ENCODE measurements at regions of chr20 and their contacts with region 1.

Region 1: GRCh38 chr20:2349818-2350508 is 30.7 kb upstream of the TGM6 start:
- DNase-seq: no peak
- ATAC-seq: no peak
- H3K4me3 Mint-ChIP-seq: no peak overlapping the region
- H3K27ac Mint-ChIP-seq: no peak overlapping the region
- H3K4me1 Mint-ChIP-seq: peaks cover 3% of the 10 kb centered on the region
- H3K27me3 Mint-ChIP-seq: peaks cover 20% of the 10 kb centered on the region
- CTCF ChIP-seq: no peak

Region 2: GRCh38 chr20:2237059-2237458 is 112.9 kb before region 1 on chr20:
- CTCF ChIA-PET with region 1: no interaction called
- POLR2A ChIA-PET with region 1: no interaction called
- intact Hi-C with region 1: no loop called
- DNase-seq: no peak
- ATAC-seq: no peak
- H3K4me3 Mint-ChIP-seq: no peak overlapping the region
- H3K27ac Mint-ChIP-seq: no peak overlapping the region
- H3K4me1 Mint-ChIP-seq: no peaks in the 10 kb centered on the region
- H3K27me3 Mint-ChIP-seq: peaks cover 4% of the 10 kb centered on the region
- CTCF ChIP-seq: no peak

Region 3: GRCh38 chr20:2335096-2335870 is 14.7 kb before region 1 on chr20:
- CTCF ChIA-PET with region 1: no interaction called
- POLR2A ChIA-PET with region 1: no interaction called
- intact Hi-C with region 1: no loop called
- DNase-seq: no peak
- ATAC-seq: no peak
- H3K4me3 Mint-ChIP-seq: no peak overlapping the region
- H3K27ac Mint-ChIP-seq: no peak overlapping the region
- H3K4me1 Mint-ChIP-seq: no peaks in the 10 kb centered on the region
- H3K27me3 Mint-ChIP-seq: peaks cover 15% of the 10 kb centered on the region
- CTCF ChIP-seq: no peak

Region 4: DNA sequence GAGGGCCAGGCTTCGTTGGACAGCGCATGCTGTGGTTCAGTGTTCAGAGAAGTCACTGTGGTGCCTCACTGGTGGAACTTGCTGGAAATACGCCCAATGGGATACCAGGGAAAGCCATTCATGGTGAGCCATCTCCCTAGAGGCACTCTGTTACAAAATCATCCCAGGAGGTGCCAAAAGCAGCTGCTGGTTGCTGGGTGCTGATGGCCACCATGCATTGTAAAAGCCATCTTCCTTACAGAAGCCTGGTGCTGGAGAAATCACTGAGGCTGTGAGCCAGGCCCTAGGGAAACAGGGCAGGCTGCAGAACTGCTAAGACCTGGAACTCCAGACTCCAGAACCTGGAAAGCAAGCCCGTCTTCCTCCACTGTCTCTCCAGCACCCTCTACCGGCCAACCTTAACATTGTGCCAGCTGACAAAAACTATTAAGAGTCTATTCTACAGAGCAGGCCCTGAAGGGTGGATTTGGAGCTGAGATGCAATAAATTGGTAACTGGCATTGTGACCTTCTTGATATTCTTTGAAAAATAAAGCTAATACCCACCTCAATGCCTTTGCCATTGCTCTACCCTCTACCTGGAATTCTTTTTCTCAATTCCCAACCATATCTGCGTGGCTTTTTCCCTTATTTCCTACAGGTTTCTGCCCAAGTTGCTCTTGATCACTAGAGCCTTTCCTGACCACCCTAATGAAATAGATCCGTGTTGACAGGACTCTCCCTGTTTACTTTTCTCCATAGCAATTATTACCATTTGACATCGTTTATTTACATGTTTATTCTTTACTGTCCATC is 102.2 kb after region 1 on chr20:
- CTCF ChIA-PET with region 1: no interaction called
- POLR2A ChIA-PET with region 1: no interaction called
- intact Hi-C with region 1: loop called (anchors 1 kb)
- DNase-seq: peak; percentile 23
- ATAC-seq: peak; percentile 54
- H3K4me3 Mint-ChIP-seq: no peak overlapping the region
- H3K27ac Mint-ChIP-seq: no peak overlapping the region
- H3K4me1 Mint-ChIP-seq: peaks cover 2% of the 10 kb centered on the region
- H3K27me3 Mint-ChIP-seq: no peaks in the 10 kb centered on the region
- CTCF ChIP-seq: no peak